ENCODE measurements at regions of chr2 and their contacts with region 1.

Region 1: GRCh38 chr2:132752421-132753206 is 82.6 kb upstream of the LYPD1 start:
- DNase-seq: no peak
- ATAC-seq: no peak
- H3K4me3 ChIP-seq: no peak overlapping the region
- H3K4me3 Mint-ChIP-seq: no peak overlapping the region
- H3K27ac ChIP-seq: no peak overlapping the region
- H3K27ac Mint-ChIP-seq: no peak overlapping the region
- H3K4me1 ChIP-seq: no peaks in the 10 kb centered on the region
- H3K4me1 Mint-ChIP-seq: no peaks in the 10 kb centered on the region
- H3K27me3 ChIP-seq: no peaks in the 10 kb centered on the region
- H3K27me3 Mint-ChIP-seq: no peaks in the 10 kb centered on the region
- CTCF ChIP-seq: no peak

Region 2: GRCh38 chr2:132766573-132766972 is 14.0 kb after region 1 on chr2:
- CTCF ChIA-PET with region 1: no interaction called
- POLR2A ChIA-PET with region 1: no interaction called
- intact Hi-C with region 1: loop called (anchors 1 kb)
- DNase-seq: no peak
- ATAC-seq: no peak
- H3K4me3 ChIP-seq: no peak overlapping the region
- H3K4me3 Mint-ChIP-seq: no peak overlapping the region
- H3K27ac ChIP-seq: no peak overlapping the region
- H3K27ac Mint-ChIP-seq: no peak overlapping the region
- H3K4me1 ChIP-seq: no peaks in the 10 kb centered on the region
- H3K4me1 Mint-ChIP-seq: no peaks in the 10 kb centered on the region
- H3K27me3 ChIP-seq: no peaks in the 10 kb centered on the region
- H3K27me3 Mint-ChIP-seq: no peaks in the 10 kb centered on the region
- CTCF ChIP-seq: no peak